Testis (tissue), 5 donors: ENCODE measurements at regions of chr6 and their contacts with region 1.

Region 1: DNA sequence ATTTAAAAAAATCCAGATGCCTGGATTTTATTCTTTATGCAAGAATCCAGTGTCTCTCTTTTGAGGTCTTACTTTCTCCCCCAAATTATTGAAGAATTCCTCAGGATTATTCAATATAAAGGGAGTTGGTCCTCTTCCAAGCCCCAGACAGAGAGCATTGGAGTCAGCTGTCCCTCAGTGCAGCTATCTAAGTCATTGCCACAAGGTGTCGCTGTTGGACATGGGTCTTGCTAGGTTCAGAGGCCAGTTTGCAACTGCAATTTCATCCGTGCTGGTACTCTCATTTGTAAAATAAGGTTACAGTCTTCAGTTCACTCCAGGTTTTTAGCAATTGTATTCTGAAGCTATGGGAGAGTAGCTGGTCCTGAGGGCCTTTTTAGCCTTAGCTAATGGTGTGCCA is 27.8 kb downstream of the CCN2 start:
- DNase-seq: peak; percentile 86
- H3K4me3 ChIP-seq: no peak overlapping the region
- H3K27ac ChIP-seq: no peak overlapping the region
- H3K4me1 ChIP-seq: no peaks in the 10 kb centered on the region
- H3K27me3 ChIP-seq: no peaks in the 10 kb centered on the region
- CTCF ChIP-seq: peak; percentile 49 to 57 (median 52)
- POLR2A ChIP-seq: no peak

Region 2: GRCh38 chr6:131954775-131955591 is 31.6 kb after region 1 on chr6:
- intact Hi-C with region 1: no loop called
- DNase-seq: peak; percentile 35
- H3K4me3 ChIP-seq: no peak overlapping the region
- H3K27ac ChIP-seq: peak overlapping the region in 1 of 2 donors; percentile 37
- H3K4me1 ChIP-seq: no peaks in the 10 kb centered on the region
- H3K27me3 ChIP-seq: no peaks in the 10 kb centered on the region
- CTCF ChIP-seq: no peak
- POLR2A ChIP-seq: no peak

Region 3: DNA sequence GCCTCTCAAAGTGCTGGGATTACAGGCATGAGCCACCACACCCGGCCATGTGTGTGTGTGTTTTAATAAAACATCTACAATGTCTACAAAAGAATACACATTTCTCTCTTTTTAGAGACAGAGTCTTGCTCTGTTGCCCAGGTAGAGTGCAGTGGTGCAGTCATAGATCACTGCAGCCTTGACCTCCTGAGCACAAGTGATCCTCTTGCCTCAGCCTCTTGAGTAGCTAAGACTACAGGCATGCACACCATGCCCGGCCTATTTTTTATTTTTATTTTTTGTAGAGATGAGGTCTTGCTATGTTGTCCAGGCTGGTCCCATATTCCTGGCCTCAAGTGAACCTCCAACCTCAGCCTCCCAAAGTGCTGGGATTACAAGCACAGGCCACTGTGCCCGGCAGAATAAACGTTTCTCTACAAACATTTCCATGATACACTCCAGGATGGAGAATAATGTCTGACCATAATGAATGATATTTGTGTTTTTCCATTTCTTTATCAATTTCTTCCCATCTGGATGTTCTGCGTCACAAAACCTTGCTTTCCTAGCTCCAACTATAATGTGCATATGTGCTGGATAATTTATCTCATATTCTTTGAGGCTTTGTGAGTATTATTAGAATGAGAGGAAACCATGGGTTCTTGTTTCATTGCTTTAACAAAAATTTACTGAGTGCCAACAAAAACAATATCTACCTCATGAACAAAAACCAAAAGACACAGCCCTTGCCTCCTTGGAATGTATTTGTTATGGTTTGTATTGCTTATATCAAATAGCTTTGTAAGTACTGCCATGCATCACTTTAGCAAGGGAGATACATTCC is 56.4 kb after region 1 on chr6:
- intact Hi-C with region 1: no loop called
- DNase-seq: no peak
- H3K4me3 ChIP-seq: no peak overlapping the region
- H3K27ac ChIP-seq: no peak overlapping the region
- H3K4me1 ChIP-seq: peaks cover 9% of the 10 kb centered on the region
- H3K27me3 ChIP-seq: no peaks in the 10 kb centered on the region
- CTCF ChIP-seq: no peak
- POLR2A ChIP-seq: no peak

Region 4: GRCh38 chr6:132122871-132123270 is 199.5 kb after region 1 on chr6:
- intact Hi-C with region 1: no loop called
- DNase-seq: no peak
- H3K4me3 ChIP-seq: no peak overlapping the region
- H3K27ac ChIP-seq: no peak overlapping the region
- H3K4me1 ChIP-seq: no peaks in the 10 kb centered on the region
- H3K27me3 ChIP-seq: no peaks in the 10 kb centered on the region
- CTCF ChIP-seq: no peak
- POLR2A ChIP-seq: no peak

Region 5: DNA sequence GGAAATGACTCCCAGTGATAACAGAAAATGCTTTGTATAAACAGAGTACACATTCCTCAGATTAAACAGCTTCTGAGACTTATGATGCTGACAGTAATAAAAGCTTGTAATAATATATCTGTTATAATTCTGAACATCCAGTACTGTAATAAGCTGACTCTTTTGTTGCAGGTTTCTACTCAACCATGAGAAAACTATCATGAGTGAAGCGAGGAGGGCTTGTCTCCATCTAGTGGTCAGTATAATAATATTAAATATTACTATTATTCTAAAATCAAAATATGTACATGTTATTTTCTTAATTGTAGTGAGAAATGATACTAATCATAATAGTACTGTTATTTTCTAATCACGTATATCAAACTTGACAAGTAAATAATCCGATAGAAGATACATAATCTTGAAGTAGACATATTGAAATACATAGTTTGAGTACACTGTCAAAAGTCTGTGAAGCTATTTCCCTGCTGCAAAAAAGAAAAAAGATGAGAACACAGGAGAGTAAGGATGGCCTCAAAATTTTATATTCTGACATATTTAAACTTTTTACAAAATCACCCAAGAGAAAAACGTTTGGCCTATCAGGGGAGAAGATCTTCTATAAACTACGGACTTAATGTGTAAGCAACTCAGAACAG is 294.8 kb after region 1 on chr6:
- intact Hi-C with region 1: loop called (anchors 5 kb)
- DNase-seq: no peak
- H3K4me3 ChIP-seq: no peak overlapping the region
- H3K27ac ChIP-seq: no peak overlapping the region
- H3K4me1 ChIP-seq: peaks cover 7% of the 10 kb centered on the region
- H3K27me3 ChIP-seq: no peaks in the 10 kb centered on the region
- CTCF ChIP-seq: peak; percentile 17 to 63 (median 46)
- POLR2A ChIP-seq: no peak